ENCODE measurements at regions of chr4 and their contacts with region 1.

Region 1: DNA sequence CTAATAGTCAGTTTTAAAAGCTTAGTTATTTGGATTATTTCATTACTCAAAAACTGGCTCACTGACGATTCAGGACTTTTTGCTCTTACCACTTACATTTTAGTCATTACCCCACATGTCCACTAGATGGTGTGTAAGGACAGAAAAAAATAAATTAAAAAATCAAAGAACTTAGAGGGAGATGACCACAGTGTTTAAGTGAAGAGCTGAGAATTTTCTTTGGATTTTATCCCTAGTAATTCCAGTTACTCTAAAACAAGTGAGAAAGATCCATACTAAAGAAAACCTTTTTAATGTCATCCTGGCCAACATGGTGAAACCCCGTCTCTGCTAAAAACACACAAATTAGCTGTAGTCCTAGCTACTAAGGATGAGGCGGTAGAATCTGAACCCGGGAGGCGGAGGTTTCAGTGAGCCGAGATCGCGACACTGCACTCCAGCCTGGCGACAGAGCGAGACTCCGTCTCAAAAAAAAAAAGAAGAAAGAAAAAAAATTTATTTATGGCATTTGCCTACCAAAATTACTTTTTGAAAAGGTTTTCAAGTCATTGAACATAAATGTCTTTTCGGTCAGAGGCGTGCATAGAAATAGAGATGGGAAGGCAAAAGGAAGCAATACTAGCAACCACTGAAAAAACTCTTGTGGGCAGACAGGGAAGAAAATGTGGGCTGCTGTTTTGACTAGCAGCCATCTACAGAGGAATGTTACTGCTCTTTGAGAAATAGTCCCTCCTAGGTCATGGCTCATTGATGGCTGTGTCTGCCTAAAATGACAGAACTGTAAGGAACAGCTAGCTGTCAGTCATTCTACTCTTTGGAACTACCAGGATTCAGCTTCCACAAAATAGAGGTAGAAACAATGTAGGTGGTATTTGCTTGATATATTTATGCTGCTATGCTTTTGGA is 26.6 kb upstream of the TMPRSS11B start:
- DNase-seq: peak; percentile 56
- ATAC-seq: peak; percentile 70; the same call in 1 of the 2 replicates
- H3K4me3 ChIP-seq: peak overlapping the region in 1 of 2 experiments; percentile 26; a peak in 1 of 4 replicates
- H3K27ac ChIP-seq: no peak overlapping the region
- H3K4me1 ChIP-seq: no peaks in the 10 kb centered on the region
- H3K27me3 ChIP-seq: no peaks in the 10 kb centered on the region
- CTCF ChIP-seq: peak; percentile 52; the same call in 1 of the 2 replicates

Region 2: GRCh38 chr4:68218044-68218443 is 54.1 kb before region 1 on chr4:
- CTCF ChIA-PET with region 1: no interaction called
- POLR2A ChIA-PET with region 1: no interaction called
- in situ Hi-C with region 1: no loop called
- intact Hi-C with region 1: no loop called
- DNase-seq: no peak
- ATAC-seq: no peak
- H3K4me3 ChIP-seq: no peak overlapping the region
- H3K27ac ChIP-seq: no peak overlapping the region
- H3K4me1 ChIP-seq: no peaks in the 10 kb centered on the region
- H3K27me3 ChIP-seq: no peaks in the 10 kb centered on the region
- CTCF ChIP-seq: no peak

Region 3: DNA sequence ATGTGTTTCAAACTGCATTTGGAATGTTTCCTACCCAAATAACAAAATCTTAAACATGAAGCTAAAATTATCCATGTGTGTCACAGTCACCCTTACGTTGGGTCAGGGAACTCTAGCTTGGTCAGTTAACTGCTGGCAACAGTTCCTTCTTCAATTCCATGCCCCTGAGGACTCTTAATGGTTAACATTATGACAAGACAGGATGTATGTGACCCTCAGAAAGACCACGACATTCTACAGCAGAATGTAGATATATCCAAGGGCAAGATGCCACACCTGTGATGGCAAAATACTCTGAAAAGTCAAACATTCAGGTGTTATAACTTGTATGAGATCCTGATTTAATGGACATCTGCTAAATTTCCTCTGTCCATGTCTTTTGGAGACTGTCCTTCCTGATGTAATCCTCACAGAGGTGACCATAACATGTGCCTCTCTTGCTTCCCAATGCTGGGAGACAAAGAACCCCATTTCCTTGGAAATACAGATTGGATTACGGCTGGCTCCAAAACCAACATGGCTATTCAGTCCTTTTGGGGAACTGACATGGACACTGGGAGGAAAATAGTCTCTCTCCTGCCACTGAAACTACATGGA is 38.6 kb after region 1 on chr4:
- CTCF ChIA-PET with region 1: no interaction called
- POLR2A ChIA-PET with region 1: no interaction called
- in situ Hi-C with region 1: no loop called
- intact Hi-C with region 1: no loop called
- DNase-seq: no peak
- ATAC-seq: no peak
- H3K4me3 ChIP-seq: no peak overlapping the region
- H3K27ac ChIP-seq: no peak overlapping the region
- H3K4me1 ChIP-seq: no peaks in the 10 kb centered on the region
- H3K27me3 ChIP-seq: no peaks in the 10 kb centered on the region
- CTCF ChIP-seq: no peak

Region 4: DNA sequence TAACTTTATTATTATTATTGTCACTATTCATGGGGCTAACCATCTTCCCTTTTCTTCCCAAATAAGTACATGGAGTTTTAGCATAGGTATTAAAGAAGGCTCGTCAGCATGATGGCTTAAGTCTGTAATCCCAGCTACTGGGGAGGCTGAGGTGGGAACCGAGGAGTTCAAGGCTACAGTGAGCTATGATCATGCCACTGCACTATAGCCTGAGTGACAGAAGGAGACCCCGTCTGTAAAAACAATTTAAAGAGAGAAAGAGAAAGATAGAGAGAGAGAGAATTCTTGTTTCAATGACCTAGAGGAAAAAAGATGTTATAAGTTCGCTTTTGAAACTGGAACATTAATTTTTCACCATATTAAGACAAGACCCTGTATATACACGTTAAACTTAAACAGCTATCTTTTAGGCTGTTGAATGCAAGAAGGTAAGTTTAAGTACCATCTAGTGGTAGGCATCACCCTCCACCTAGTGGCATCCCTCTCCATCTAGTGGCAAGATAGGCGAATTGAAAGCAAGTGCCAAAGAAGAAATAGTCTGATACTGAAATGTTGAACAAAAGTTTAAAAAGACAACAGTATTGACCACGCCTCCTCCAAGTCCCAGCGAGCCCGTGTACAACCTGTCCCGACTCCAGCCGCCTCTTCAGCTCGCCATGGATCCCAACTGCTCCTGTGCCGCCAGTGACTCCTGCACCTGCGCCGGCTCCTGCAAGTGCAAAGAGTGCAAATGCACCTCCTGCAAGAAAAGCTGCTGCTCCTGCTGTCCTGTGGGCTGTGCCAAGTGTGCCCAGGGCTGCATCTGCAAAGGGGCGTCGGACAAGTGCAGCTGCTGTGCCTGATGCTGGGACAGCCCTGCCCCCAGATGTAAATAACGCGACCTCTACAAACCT is 103.8 kb after region 1 on chr4:
- CTCF ChIA-PET with region 1: no interaction called
- POLR2A ChIA-PET with region 1: no interaction called
- in situ Hi-C with region 1: no loop called
- intact Hi-C with region 1: loop called (anchors 2 kb)
- DNase-seq: peak; percentile 48
- ATAC-seq: peak; percentile 93
- H3K4me3 ChIP-seq: peak overlapping the region in 1 of 2 experiments; percentile 31; a peak in 2 of 4 replicates
- H3K27ac ChIP-seq: no peak overlapping the region
- H3K4me1 ChIP-seq: no peaks in the 10 kb centered on the region
- H3K27me3 ChIP-seq: no peaks in the 10 kb centered on the region
- CTCF ChIP-seq: peak; percentile 78

Measured in Panc1 (cell line).